ENCODE measurements at regions of chr18 and their contacts with region 1.

Region 1: DNA sequence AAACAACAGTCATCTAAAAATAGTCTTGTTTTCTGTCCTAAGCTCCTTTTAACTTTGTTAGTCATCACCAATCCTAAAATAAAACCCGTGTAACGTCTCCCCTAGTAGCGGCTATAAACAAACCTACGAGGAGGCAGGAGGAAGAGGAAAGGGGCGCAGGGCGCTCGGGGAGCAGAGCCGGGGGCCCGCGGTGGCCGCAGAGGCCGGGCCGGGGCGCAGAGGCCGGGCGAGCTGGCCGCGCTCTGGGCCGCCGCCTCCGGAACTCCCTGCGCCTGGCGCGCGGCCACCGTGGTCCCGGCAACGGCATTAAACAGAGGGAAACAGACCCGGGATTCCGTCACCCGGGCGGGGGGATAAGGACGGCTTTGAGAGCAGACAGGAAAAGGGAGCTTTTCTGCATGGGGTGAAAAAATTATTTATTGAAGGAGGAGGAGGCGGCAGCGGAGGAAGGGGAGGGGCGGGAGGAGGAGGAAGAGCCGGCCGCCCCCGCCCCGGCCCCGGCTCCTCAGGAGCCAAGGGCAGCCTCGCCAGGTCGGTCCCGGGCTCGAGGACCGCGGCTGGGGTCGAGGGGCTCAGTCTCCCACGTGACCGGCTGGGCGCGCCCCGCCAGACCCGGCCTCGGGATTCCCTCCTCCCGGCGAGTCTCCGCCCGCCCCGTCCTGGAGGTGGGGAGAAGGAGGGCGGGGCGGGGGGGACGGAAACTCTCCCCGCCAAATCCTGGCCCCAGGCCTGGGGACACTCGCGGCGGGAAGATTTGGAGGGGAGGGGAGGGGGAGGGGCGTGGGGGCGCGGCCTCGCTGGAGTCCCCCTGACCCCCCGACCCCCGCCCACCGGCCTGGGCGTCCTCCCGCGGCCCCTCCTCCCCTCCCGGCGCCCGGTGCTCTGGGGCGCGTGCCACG is 1.8 kb upstream of the NFATC1 start:
- DNase-seq: peak; percentile 49 to 77 (median 52)
- H3K4me3 ChIP-seq: peak overlapping the region in 1 of 2 donors; percentile 57
- H3K4me3 Mint-ChIP-seq: peak overlapping the region; percentile 86 to 94 (median 90)
- H3K27ac ChIP-seq: peak overlapping the region; percentile 41
- H3K27ac Mint-ChIP-seq: peak overlapping the region; percentile 65 to 93 (median 88)
- H3K4me1 ChIP-seq: peaks cover 37% of the 10 kb centered on the region
- H3K4me1 Mint-ChIP-seq: peaks cover 18 to 44% (median 21%) of the 10 kb centered on the region in 4 donors
- H3K27me3 ChIP-seq: no peaks in the 10 kb centered on the region
- H3K27me3 Mint-ChIP-seq: peaks cover 3 to 4% of the 10 kb centered on the region in 2 donors

Region 2: DNA sequence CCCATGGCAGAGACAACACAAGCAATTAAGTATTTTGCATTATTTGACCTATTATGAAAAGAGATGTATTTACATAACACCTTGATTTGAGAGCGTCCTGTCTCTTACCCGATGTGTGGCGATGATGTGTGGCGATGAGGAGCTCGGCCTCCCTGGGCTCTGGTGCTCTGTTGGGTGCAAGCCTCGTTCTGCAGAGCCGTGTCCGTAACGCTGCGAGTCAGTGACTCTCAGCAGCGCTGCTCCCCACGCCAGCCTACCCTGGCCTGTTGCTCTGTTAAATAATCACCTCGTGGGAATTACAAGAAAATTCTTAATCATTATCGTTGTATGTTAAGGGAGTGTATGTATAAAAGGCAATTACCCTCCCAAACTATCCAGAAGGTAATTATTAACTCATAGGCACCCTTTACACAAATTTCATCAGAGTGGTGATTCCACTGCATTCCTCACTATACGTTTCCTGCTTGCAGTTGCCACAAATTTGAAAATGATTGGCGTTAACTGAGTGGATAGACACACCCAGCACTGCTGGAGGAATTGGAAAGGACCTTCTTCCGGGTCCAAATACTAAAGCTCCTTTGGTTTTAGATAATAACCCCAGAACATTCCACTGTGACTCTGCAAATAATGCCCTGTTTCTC is 50.2 kb before region 1 on chr18:
- CTCF ChIA-PET with region 1: no interaction called
- POLR2A ChIA-PET with region 1: no interaction called
- intact Hi-C with region 1: no loop called
- DNase-seq: no peak
- H3K4me3 ChIP-seq: no peak overlapping the region
- H3K4me3 Mint-ChIP-seq: no peak overlapping the region
- H3K27ac ChIP-seq: no peak overlapping the region
- H3K27ac Mint-ChIP-seq: peak overlapping the region in 2 of 7 donors; percentile 37 to 61
- H3K4me1 ChIP-seq: no peaks in the 10 kb centered on the region
- H3K4me1 Mint-ChIP-seq: peaks cover 0 to 7% (median 0%) of the 10 kb centered on the region in 4 donors
- H3K27me3 ChIP-seq: no peaks in the 10 kb centered on the region
- H3K27me3 Mint-ChIP-seq: no peaks in the 10 kb centered on the region

Region 3: DNA sequence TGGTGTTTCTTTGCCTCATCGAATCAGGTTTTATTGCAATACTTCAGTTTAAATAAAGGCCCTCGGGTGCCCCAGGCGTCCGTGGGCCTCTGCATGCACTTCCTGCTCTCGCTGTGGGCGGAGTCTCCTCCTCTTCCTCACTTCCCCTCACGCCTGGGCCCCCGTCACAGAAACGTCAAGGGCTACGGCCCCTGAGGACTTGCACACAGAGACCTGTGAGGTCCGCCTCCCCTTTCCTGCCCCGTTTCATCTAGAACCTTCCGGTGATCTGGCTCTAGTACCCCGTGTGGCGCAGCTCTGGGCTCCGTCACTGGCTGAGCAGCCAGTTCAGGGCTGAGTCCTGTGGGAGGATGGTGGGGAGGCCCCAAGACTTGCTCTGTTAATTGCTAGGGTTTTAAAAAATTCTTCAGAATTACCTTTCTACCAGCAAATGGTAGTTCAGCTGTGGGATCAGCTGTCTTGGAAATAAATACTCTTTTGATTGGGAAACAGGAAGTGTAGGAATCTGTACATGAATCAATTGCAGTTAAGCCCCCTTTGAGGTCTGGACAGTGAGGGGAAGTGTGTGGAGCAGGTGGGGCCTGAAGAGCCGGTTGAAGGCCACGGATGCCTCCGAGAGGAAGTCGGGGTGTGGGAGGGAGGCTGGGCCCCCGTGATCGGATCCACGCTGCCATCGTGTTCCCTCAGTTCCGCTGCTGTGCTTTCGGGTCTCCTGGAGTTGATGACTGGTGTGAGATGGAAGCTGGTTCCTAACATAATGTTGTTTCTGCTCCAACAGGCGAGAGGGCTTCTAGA is 12.1 kb after region 1 on chr18:
- CTCF ChIA-PET with region 1: interaction called, 10 read pairs
- POLR2A ChIA-PET with region 1: interaction called, 33 read pairs
- intact Hi-C with region 1: loop called (anchors 1 kb)
- DNase-seq: peak; percentile 91 to 98 (median 95)
- H3K4me3 ChIP-seq: peak overlapping the region; percentile 49 to 60
- H3K4me3 Mint-ChIP-seq: peak overlapping the region; percentile 83 to 95 (median 92)
- H3K27ac ChIP-seq: peak overlapping the region; percentile 87
- H3K27ac Mint-ChIP-seq: peak overlapping the region in 6 of 7 donors; percentile 95 to 100 (median 98)
- H3K4me1 ChIP-seq: peaks cover 62% of the 10 kb centered on the region
- H3K4me1 Mint-ChIP-seq: peaks cover 40 to 66% (median 55%) of the 10 kb centered on the region in 4 donors
- H3K27me3 ChIP-seq: no peaks in the 10 kb centered on the region
- H3K27me3 Mint-ChIP-seq: no peaks in the 10 kb centered on the region

Region 4: GRCh38 chr18:79523736-79524180 is 129.9 kb after region 1 on chr18:
- CTCF ChIA-PET with region 1: interaction called, 31 read pairs
- POLR2A ChIA-PET with region 1: interaction called, 173 read pairs
- intact Hi-C with region 1: loop called (anchors 1 kb)
- DNase-seq: peak; percentile 82 to 93 (median 84)
- H3K4me3 ChIP-seq: peak overlapping the region in 1 of 2 donors; percentile 68
- H3K4me3 Mint-ChIP-seq: peak overlapping the region; percentile 86 to 95 (median 92)
- H3K27ac ChIP-seq: peak overlapping the region; percentile 85
- H3K27ac Mint-ChIP-seq: peak overlapping the region; percentile 97 to 99 (median 99)
- H3K4me1 ChIP-seq: peaks cover 64% of the 10 kb centered on the region
- H3K4me1 Mint-ChIP-seq: peaks cover 40 to 84% (median 57%) of the 10 kb centered on the region in 4 donors
- H3K27me3 ChIP-seq: no peaks in the 10 kb centered on the region
- H3K27me3 Mint-ChIP-seq: no peaks in the 10 kb centered on the region

Region 5: GRCh38 chr18:79528846-79529245 is 135.0 kb after region 1 on chr18:
- CTCF ChIA-PET with region 1: interaction called, 31 read pairs
- POLR2A ChIA-PET with region 1: interaction called, 173 read pairs
- intact Hi-C with region 1: no loop called
- DNase-seq: peak; percentile 72 to 78 (median 75)
- H3K4me3 ChIP-seq: no peak overlapping the region
- H3K4me3 Mint-ChIP-seq: peak overlapping the region in 1 of 8 donors; percentile 30
- H3K27ac ChIP-seq: no peak overlapping the region
- H3K27ac Mint-ChIP-seq: peak overlapping the region in 5 of 7 donors; percentile 14 to 84 (median 57)
- H3K4me1 ChIP-seq: peaks cover 15% of the 10 kb centered on the region
- H3K4me1 Mint-ChIP-seq: peaks cover 8 to 37% (median 20%) of the 10 kb centered on the region in 4 donors
- H3K27me3 ChIP-seq: no peaks in the 10 kb centered on the region
- H3K27me3 Mint-ChIP-seq: no peaks in the 10 kb centered on the region

Region 6: DNA sequence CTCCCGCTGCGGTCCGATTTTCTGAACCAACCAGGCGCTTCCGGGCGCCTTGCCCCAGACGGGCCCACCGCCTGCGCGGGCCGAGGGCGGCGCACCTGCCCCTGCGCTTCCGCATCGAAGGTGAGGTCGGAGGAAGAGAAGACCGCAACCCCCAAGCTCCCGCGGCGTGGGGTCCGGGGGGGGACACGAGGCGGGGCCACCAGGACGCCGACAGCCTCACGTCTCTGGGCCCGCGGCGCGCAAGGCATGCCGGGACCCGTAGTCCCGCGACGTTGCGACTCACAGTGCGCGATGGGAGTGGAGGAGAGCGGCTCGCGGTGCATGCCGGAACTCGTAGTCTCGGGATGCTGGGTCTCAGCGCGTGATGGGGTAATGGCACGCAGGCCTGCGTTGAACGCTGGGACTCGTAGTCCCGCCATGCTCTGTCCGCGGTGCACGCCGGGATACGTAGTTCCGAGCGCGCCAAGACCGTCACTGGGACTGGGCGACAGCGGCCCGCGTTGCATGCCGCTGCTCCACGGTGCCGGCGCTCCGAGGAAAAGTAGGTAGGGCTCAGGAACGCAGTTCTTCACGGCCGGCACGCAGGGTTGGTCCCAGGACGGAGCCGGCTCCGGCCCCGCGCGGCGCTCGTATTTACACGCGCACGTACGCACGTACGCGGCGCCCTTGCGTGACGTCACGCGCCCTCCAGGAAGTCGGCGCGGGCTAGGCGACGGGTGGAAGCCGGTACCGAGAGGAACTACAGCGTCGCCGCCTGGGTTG is 285.4 kb after region 1 on chr18 and contains the start of gene CTDP1:
- CTCF ChIA-PET with region 1: no interaction called
- POLR2A ChIA-PET with region 1: interaction called, 5 read pairs
- intact Hi-C with region 1: loop called (anchors 1 kb)
- DNase-seq: peak; percentile 98 to 99 (median 99)
- H3K4me3 ChIP-seq: peak within 1 kb of the TSS; percentile 75 to 88
- H3K4me3 Mint-ChIP-seq: peak within 1 kb of the TSS; percentile 95 to 100 (median 98)
- H3K27ac ChIP-seq: peak within 1 kb of the TSS; percentile 98
- H3K27ac Mint-ChIP-seq: peak within 1 kb of the TSS; percentile 99 to 100 (median 99)
- H3K4me1 ChIP-seq: peaks cover 53% of the 10 kb centered on the region
- H3K4me1 Mint-ChIP-seq: peaks cover 40 to 64% (median 54%) of the 10 kb centered on the region in 4 donors
- H3K27me3 ChIP-seq: no peaks in the 10 kb centered on the region
- H3K27me3 Mint-ChIP-seq: no peaks in the 10 kb centered on the region
- total RNA-seq, gene CTDP1: 42.6 to 44.5 TPM

Region 7: GRCh38 chr18:80108728-80109675 is 715.1 kb after region 1 on chr18 and contains the start of gene ADNP2:
- CTCF ChIA-PET with region 1: no interaction called
- POLR2A ChIA-PET with region 1: no interaction called
- intact Hi-C with region 1: loop called (anchors 10 kb)
- DNase-seq: peak; percentile 90 to 95 (median 92)
- H3K4me3 ChIP-seq: peak within 1 kb of the TSS; percentile 55 to 67
- H3K4me3 Mint-ChIP-seq: peak within 1 kb of the TSS; percentile 83 to 88 (median 86)
- H3K27ac ChIP-seq: peak within 1 kb of the TSS; percentile 80
- H3K27ac Mint-ChIP-seq: peak within 1 kb of the TSS; percentile 96 to 97 (median 96)
- H3K4me1 ChIP-seq: peaks cover 32% of the 10 kb centered on the region
- H3K4me1 Mint-ChIP-seq: peaks cover 35 to 60% (median 45%) of the 10 kb centered on the region in 4 donors
- H3K27me3 ChIP-seq: no peaks in the 10 kb centered on the region
- H3K27me3 Mint-ChIP-seq: no peaks in the 10 kb centered on the region
- total RNA-seq, gene ADNP2: 20.2 to 20.9 TPM